CD14-positive monocyte (primary cell): ENCODE measurements at regions of chr9 and their contacts with region 1.

Region 1: DNA sequence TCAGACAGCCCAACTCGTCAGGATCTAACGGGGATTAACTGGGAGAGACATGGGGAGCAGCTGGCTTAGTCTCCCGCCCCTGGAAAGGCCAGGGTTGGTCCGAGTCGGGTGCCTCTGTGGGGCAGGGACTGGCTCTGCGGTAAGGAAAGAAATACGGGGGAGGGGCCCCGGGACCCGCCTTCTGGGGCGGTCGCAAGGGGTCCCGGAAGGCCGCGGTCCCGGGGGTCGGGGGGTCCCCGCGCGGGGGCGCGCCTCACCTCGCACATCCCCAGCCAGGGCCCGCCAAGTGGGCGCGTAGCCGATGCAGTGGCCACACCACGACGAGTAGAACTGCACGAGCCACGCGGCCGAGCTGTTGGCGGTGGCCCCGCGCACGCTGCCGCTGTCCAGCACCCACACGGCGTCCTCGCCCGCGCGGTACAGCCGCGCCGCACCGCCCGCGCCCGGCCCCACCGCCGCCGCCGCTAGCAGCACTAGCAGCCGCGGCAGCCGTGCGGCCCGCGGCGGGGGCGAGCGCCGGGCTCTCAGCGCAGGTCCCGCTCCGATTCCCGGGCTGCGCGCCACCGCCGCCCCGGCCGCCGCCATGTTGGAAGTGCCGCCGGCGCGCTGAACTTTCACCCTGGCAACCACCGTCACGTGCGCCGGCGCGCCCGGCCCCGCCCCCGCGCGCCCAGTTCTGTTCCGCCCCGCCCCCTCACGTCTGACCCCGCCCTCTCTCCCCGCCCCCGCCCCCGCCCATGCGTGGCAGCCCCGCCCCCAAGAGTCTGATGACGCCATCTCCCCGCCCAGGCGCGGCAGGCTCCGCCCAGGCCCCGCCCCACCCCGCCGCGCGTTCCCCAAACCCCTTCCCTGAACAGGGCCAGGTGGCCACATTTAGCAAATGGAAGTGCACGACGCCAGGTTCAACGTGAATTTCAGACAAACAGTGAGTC is at the start of gene QSOX2:
- DNase-seq: peak; percentile 75 to 89 (median 76)
- H3K4me3 ChIP-seq: peak within 1 kb of the TSS; percentile 36 to 82 (median 79)
- H3K4me3 Mint-ChIP-seq: peak within 1 kb of the TSS; percentile 81 to 89
- H3K27ac ChIP-seq: no peak within 1 kb of the TSS
- H3K27ac Mint-ChIP-seq: peak within 1 kb of the TSS in 5 of 7 donors; percentile 58 to 84 (median 78)
- H3K4me1 ChIP-seq: peaks cover 18 to 23% of the 10 kb centered on the region in 2 donors
- H3K4me1 Mint-ChIP-seq: peaks cover 38% of the 10 kb centered on the region
- H3K27me3 ChIP-seq: no peaks in the 10 kb centered on the region
- H3K27me3 Mint-ChIP-seq: peaks cover 6 to 9% (median 8%) of the 10 kb centered on the region in 3 donors
- CTCF ChIP-seq: no peak
- polyA plus RNA-seq, gene QSOX2: 0.03 to 8.4 (median 0.17) TPM

Region 2: GRCh38 chr9:136267261-136268111 is 22.0 kb after region 1 on chr9:
- intact Hi-C with region 1: loop called in 1 of 2 experiments (anchors 2 kb)
- DNase-seq: peak; percentile 76 to 80 (median 80)
- H3K4me3 ChIP-seq: peak overlapping the region; percentile 42 to 77 (median 57)
- H3K4me3 Mint-ChIP-seq: peak overlapping the region; percentile 80 to 84
- H3K27ac ChIP-seq: peak overlapping the region; percentile 48 to 56
- H3K27ac Mint-ChIP-seq: peak overlapping the region in 6 of 7 donors; percentile 15 to 77 (median 51)
- H3K4me1 ChIP-seq: peaks cover 17 to 29% of the 10 kb centered on the region in 2 donors
- H3K4me1 Mint-ChIP-seq: peaks cover 20% of the 10 kb centered on the region
- H3K27me3 ChIP-seq: peaks cover 0 to 4% of the 10 kb centered on the region in 2 donors
- H3K27me3 Mint-ChIP-seq: peaks cover 4 to 15% (median 14%) of the 10 kb centered on the region in 3 donors
- CTCF ChIP-seq: peak; percentile 18